GM10248 (cell line): ENCODE measurements at regions of chr1 and their contacts with region 1.

Region 1: DNA sequence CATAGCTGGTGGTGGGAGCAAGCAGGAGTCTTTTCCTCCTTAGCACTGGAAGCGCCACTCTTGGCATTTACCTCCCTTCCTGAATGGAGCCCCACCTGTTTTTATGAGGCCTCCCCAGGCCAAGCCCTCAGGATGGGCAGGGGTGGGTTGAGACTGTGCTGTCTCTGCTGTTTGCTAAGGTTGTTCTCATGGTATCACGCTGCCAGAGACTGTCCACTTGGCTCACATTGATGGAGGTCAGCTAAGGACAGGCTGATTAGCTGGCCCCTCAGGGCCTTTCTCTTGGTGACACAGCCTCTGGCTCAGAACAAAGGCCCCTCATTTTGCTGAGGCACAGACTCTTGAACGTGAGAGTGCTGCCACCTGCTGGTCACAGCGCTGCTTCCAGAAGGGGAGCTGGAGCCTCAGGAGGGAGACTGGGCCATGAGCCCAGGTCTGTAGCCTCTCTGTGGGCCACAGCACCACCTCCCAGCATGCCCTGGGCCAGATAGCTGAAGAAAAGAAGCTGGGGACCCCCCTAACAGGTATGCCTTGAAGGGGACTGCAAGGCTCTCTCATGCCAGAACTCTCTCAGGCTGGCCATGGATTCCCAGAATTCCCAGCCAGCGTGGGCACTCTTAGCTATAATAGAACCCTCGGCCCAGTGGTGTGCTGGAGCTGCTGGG is 85.6 kb downstream of the CD58 start:
- DNase-seq: peak; percentile 82
- CTCF ChIP-seq: peak; percentile 98

Region 2: GRCh38 chr1:116122955-116123757 is 362.0 kb before region 1 on chr1:
- CTCF ChIA-PET with region 1: interaction called, 20 read pairs
- POLR2A ChIA-PET with region 1: no interaction called
- DNase-seq: no peak
- CTCF ChIP-seq: no peak

Region 3: DNA sequence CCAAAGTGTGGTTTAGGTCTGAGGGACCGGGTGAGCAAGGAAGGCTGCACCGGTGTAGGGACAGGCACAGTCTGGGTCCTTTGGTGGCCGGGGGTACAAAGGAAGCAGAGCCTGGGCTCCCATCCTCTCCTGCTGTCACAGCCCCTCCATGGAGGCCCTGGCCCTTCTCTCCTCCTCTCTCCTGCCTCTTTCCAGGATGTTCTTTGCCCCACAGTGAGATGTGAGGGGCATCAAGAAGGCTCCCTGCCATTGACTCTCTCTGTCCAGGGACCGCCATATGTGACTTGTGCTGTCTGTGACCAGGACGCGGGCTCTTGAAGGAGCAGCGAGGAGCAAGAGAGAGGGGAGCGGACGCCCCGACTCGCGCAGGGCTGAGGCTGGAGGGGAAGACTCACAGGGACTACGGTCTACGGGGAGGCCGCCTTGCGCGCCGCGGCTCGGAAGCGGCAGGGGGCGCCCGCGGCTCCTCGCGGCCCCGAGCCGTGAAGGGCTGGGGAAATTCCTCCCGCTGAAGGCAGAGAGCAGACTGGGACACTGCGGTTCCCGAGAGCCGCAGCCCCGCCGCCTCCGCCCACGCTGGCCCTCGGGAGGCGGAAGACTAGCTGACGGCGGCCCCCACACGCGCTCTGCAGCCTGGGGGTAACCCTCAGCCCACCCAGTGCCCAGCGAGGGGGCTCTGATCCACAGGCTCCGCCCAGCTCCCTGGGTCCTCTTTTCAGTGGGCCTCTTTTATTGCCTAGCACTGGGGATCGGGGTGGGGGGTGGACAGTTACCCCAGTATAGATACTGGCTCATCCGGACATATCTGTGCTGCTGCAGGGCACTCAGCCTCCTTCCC is 333.2 kb before region 1 on chr1:
- CTCF ChIA-PET with region 1: interaction called, 156 read pairs
- POLR2A ChIA-PET with region 1: no interaction called
- DNase-seq: peak; percentile 93
- CTCF ChIP-seq: peak; percentile 97

Region 4: DNA sequence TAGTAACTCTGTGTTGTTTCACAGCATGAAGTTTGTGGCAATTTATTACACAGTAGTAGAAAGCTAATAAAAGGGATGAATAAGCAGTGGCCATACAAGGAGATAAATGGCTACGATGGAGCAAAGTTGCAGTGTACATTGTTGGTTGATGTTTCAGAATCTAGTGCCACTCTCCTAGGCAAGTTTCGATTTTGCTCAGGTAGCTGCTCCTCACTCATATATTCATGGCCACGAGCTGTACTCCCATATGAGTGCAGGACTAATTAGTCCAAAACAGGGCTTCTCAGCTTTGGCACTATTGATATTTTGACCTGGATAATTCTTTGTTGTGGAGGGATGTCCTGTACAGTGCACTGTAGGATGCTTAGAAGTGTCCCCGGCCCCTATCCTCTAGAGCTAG is 142.2 kb before region 1 on chr1:
- CTCF ChIA-PET with region 1: interaction called, 11 read pairs
- POLR2A ChIA-PET with region 1: no interaction called
- DNase-seq: no peak
- CTCF ChIP-seq: no peak

Region 5: DNA sequence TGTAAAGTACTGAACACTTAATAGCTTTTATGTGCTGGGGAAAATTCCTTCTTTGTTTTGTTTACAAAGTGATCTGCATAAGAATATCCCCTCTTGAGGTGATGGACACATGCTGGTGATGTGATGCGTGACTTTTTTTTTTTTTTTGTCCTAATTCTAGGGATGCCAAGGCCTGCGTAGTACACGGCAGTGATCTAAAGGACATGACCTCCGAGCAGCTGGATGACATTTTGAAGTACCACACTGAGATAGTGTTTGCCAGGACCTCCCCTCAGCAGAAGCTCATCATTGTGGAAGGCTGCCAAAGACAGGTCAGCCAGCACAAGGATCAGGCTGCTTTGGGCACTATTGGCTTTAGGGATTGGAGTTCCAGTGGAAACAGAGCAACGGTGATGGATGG is 87.5 kb before region 1 on chr1:
- CTCF ChIA-PET with region 1: interaction called, 19 read pairs
- POLR2A ChIA-PET with region 1: no interaction called
- DNase-seq: no peak
- CTCF ChIP-seq: no peak

Region 6: DNA sequence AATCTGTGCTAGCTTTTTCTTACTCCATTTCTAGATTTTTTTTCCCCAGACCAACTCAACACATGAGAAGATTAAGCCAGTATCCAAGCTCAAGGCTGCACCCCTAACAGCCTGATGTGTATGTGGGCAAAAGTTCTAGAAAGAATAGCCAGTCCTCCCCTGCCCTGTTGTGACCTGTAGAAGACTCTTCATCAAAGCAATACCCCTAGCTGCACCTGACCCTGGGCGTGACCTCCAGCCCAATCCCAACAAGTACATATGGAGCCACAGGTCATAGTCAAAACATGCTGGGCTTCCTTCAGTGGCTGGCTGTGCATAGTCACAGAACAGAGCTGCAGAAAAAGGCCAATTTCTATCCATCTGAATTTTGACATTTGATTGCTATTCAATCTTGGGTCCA is 39.7 kb before region 1 on chr1:
- CTCF ChIA-PET with region 1: interaction called, 11 read pairs
- POLR2A ChIA-PET with region 1: no interaction called
- DNase-seq: no peak
- CTCF ChIP-seq: no peak

Region 7: DNA sequence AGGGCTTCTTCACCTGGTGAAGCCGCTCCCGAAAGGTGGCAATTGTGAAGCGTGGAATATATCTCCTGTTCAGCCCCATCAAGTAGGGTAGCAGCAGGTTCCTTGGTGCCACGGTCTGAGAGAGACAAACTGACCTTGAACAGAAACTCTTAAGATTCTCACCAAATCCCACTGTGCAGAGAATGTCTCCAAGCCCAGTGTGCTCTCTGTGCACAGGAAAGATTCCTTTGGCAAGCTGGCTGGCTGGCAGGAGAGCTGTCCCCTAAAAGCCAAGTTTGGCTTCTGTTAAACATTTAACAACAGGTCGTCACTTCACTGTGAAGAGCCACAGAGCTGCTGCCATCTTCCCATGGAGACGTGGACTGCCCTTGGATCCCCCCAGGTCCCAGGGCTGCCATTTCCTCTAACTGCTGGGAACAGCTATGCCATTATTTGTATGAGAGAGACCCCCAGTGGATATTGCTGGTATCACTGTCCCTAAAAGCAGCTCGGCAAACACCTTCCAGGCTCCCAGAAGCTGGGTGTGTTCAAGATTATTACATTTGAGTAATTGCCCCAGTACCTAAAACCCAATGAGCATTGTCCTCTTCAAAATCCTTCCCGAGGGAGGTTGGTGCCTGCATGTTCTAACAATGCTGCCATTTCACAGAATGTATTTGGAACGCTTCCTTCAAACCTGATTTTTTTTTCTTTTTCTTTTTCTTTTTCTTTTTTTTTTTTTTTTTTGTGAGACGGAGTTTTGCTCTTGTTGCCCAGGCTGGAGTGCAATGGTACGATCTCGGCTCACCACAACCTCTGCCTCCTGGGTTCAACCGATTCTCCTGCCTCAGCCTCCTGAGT is 13.8 kb after region 1 on chr1:
- CTCF ChIA-PET with region 1: interaction called, 260 read pairs
- POLR2A ChIA-PET with region 1: no interaction called
- DNase-seq: peak; percentile 70
- CTCF ChIP-seq: peak; percentile 75